CD8-positive, alpha-beta T cell (primary cell): ENCODE measurements at regions of chr19 and their contacts with region 1.

Region 1: GRCh38 chr19:38849860-38850435 is at the start of gene HNRNPL:
- DNase-seq: peak in 6 of 9 experiments; percentile 98 to 100 (median 99)
- ATAC-seq: peak; percentile 68
- H3K4me3 ChIP-seq: peak within 1 kb of the TSS; percentile 70 to 72
- H3K4me3 Mint-ChIP-seq: peak within 1 kb of the TSS; percentile 97
- H3K27ac ChIP-seq: peak within 1 kb of the TSS; percentile 85 to 97
- H3K27ac Mint-ChIP-seq: peak within 1 kb of the TSS; percentile 99
- H3K4me1 ChIP-seq: peaks cover 54% of the 10 kb centered on the region
- H3K4me1 Mint-ChIP-seq: peaks cover 52% of the 10 kb centered on the region
- H3K27me3 ChIP-seq: no peaks in the 10 kb centered on the region
- H3K27me3 Mint-ChIP-seq: no peaks in the 10 kb centered on the region
- CTCF ChIP-seq: peak; percentile 21
- total RNA-seq, gene HNRNPL: 615 to 625 TPM

Region 2: DNA sequence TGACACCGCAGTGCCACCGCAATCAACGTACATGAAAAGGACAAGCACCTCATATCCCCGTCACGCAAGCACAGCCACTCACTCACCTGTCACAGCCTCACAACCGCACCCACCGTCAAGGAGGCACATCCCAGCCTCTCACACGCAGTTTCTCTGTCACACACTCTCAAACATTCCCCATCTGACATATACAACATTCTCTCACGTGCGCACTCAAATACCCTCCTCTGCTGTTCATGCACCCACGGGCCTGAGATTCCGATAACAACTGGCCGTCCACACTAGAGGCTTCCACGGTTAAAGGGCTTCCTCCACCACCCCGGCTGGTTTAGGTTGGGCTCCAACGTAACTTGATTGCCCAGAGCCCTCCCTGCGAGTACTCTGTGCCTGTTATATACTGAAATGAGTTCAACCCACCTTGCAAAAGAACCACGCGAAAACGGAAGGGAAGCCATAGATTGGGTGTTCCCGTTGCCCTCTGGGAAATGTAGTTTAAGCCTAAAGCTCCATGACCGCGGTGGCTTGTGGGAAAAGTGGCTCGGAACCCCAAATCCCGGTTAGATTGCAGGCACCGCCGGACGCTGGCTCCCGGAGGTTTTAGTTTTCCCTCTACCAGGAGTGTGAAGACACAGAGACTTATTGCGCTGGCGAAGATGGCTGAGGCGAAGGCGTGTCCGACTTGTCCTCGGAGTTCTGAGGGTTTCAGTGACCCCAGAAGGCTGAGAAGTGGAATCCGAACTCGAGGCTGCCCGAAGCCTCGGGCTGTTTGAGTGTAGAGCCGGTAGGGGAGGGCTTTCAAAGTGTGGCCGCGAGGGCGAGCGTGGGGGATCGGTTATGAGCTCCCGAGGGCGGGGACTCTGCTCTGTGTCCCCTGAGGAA is 1070.6 kb before region 1 on chr19 and contains the start of gene ZNF573:
- CTCF ChIA-PET with region 1: no interaction called
- POLR2A ChIA-PET with region 1: no interaction called
- intact Hi-C with region 1: loop called in 1 of 2 experiments (anchors 10 kb)
- DNase-seq: peak; percentile 66 to 99 (median 82)
- ATAC-seq: peak; percentile 84
- H3K4me3 ChIP-seq: peak within 1 kb of the TSS; percentile 67 to 70
- H3K4me3 Mint-ChIP-seq: peak within 1 kb of the TSS; percentile 97
- H3K27ac ChIP-seq: peak within 1 kb of the TSS; percentile 96 to 98
- H3K27ac Mint-ChIP-seq: peak within 1 kb of the TSS; percentile 91
- H3K4me1 ChIP-seq: peaks cover 12% of the 10 kb centered on the region
- H3K4me1 Mint-ChIP-seq: peaks cover 46% of the 10 kb centered on the region
- H3K27me3 ChIP-seq: no peaks in the 10 kb centered on the region
- H3K27me3 Mint-ChIP-seq: no peaks in the 10 kb centered on the region
- CTCF ChIP-seq: no peak
- total RNA-seq, gene ZNF573: 3.9 to 5.8 TPM

Region 3: GRCh38 chr19:38634757-38635482 is 215.0 kb before region 1 on chr19:
- CTCF ChIA-PET with region 1: interaction called, 3 read pairs
- POLR2A ChIA-PET with region 1: no interaction called
- intact Hi-C with region 1: loop called in 1 of 2 experiments (anchors 5 kb)
- DNase-seq: peak; percentile 49 to 84 (median 73)
- ATAC-seq: peak; percentile 30
- H3K4me3 ChIP-seq: no peak overlapping the region
- H3K4me3 Mint-ChIP-seq: peak overlapping the region; percentile 47
- H3K27ac ChIP-seq: peak overlapping the region in 1 of 2 experiments; percentile 63
- H3K27ac Mint-ChIP-seq: peak overlapping the region; percentile 46
- H3K4me1 ChIP-seq: peaks cover 26% of the 10 kb centered on the region
- H3K4me1 Mint-ChIP-seq: peaks cover 24% of the 10 kb centered on the region
- H3K27me3 ChIP-seq: no peaks in the 10 kb centered on the region
- H3K27me3 Mint-ChIP-seq: no peaks in the 10 kb centered on the region
- CTCF ChIP-seq: peak; percentile 88

Region 4: DNA sequence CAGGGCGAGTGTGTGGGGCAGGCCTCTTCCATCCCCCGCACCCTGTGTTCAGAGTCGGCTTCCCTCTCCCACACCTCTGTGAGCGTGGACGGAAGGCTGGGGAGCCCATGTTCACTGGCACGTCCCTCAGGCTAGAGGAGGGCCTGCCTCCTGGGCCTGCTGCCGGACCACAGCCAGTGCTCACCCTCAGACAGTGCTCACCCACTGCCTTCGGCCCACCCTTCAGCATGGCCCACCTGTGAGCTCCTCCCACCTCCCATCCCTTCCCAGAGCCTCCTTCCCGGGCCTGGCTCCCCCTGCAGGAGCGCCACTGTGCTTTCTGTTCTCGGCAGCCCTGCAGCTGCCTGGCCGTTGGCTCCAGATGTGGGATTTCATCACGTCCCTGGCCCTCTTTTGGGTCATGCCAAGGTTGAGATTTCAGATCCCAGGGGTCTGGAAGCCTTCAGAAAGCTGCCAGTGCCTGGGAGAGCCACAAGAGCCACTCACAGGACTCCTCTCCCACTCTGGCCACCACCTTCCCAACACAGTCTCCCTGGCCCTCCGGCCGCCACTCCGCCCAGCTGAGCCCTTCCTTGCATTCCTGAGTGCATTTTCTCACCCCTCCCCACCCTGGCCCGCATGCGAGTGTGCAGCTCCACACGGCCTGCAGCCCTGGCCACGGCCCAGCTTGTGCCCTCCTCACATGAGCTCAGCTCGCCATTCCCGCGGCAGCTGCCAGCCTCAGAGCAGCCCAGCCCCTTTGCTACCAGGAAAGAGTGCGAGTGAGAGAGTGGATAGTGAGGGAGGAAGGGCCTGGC is 131.0 kb before region 1 on chr19:
- CTCF ChIA-PET with region 1: no interaction called
- POLR2A ChIA-PET with region 1: no interaction called
- intact Hi-C with region 1: no loop called
- DNase-seq: no peak
- ATAC-seq: no peak
- H3K4me3 ChIP-seq: no peak overlapping the region
- H3K4me3 Mint-ChIP-seq: no peak overlapping the region
- H3K27ac ChIP-seq: no peak overlapping the region
- H3K27ac Mint-ChIP-seq: no peak overlapping the region
- H3K4me1 ChIP-seq: no peaks in the 10 kb centered on the region
- H3K4me1 Mint-ChIP-seq: no peaks in the 10 kb centered on the region
- H3K27me3 ChIP-seq: no peaks in the 10 kb centered on the region
- H3K27me3 Mint-ChIP-seq: no peaks in the 10 kb centered on the region
- CTCF ChIP-seq: no peak

Region 5: DNA sequence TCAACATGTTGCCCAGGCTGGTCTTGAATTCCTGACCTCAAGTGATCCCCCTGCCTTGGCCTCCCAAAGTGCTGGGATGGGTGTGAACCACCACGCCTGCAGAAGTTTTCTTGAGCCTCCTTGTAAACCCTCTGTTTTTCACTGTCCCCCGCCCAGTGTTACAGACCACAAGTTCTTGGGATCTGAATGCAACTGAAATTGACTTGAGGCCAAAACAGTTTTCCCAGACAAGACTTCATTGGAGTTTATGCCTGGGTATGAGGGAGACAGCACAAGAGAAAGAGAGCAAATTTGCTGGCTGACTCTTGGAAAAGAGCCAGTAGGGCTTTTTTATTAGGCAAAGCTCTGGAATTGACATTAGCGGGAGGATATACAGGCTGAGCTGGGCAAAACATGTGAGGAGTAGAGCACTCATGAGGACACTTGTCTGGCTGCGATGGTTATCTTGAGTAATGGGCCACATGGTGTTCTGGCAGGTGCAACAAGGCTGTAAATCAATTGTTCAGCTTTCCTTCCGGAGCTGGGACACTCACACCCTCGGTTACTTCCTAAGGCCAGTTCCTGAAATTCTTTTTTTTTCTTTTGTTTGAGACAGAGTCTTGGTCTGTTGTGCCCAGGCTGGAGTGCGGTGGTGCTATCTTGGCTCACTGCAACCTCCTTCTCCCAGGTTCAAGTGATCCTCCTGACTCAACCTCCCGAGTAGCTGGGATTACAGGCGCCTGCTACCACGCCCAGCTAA is 12.5 kb after region 1 on chr19:
- CTCF ChIA-PET with region 1: interaction called, 11 read pairs
- POLR2A ChIA-PET with region 1: interaction called, 46 read pairs
- intact Hi-C with region 1: no loop called
- DNase-seq: no peak
- ATAC-seq: no peak
- H3K4me3 ChIP-seq: no peak overlapping the region
- H3K4me3 Mint-ChIP-seq: no peak overlapping the region
- H3K27ac ChIP-seq: no peak overlapping the region
- H3K27ac Mint-ChIP-seq: no peak overlapping the region
- H3K4me1 ChIP-seq: peaks cover 38% of the 10 kb centered on the region
- H3K4me1 Mint-ChIP-seq: peaks cover 44% of the 10 kb centered on the region
- H3K27me3 ChIP-seq: no peaks in the 10 kb centered on the region
- H3K27me3 Mint-ChIP-seq: no peaks in the 10 kb centered on the region
- CTCF ChIP-seq: no peak

Region 6: GRCh38 chr19:38891771-38892170 is 41.8 kb after region 1 on chr19:
- CTCF ChIA-PET with region 1: interaction called, 12 read pairs
- POLR2A ChIA-PET with region 1: interaction called, 4 read pairs
- intact Hi-C with region 1: no loop called
- DNase-seq: no peak
- ATAC-seq: no peak
- H3K4me3 ChIP-seq: no peak overlapping the region
- H3K4me3 Mint-ChIP-seq: no peak overlapping the region
- H3K27ac ChIP-seq: no peak overlapping the region
- H3K27ac Mint-ChIP-seq: no peak overlapping the region
- H3K4me1 ChIP-seq: peaks cover 3% of the 10 kb centered on the region
- H3K4me1 Mint-ChIP-seq: peaks cover 9% of the 10 kb centered on the region
- H3K27me3 ChIP-seq: no peaks in the 10 kb centered on the region
- H3K27me3 Mint-ChIP-seq: no peaks in the 10 kb centered on the region
- CTCF ChIP-seq: no peak

Region 7: DNA sequence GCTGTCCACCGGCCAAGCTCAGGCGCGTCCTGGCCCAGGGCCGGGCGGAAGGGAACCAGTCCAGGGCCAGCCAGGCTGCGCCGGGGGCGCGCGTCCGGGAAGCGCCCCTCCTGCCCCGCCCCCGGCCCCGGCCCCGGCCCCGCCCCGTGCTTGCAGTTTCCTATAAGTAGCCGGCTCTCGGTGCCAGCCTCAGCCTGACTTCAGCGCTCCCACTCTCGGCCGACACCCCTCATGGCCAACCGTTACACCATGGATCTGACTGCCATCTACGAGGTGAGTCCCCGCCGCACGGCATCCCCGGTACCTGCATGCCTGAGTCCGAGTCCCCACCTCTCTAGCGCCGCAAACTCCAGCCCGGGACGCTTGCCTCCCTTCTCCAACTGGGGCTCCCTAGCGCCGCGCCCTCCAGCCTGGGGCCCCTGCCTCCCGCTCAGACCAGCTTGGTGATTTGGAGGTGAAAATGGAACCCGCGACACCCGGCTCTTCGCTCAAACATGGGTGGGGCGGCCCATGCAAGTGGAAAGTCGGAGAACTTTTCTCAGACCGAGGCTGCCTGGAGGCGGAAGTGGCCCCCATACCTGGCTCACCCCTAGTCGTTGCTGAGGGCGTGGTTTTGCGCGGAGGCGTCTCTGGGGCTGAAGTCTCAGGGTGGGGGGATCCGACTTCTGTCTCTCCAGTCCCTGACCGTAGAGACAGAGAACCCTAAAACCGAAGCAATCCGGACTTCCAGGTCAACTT is 556.9 kb after region 1 on chr19 and contains the start of gene ZFP36:
- CTCF ChIA-PET with region 1: no interaction called
- POLR2A ChIA-PET with region 1: no interaction called
- intact Hi-C with region 1: loop called in 1 of 2 experiments (anchors 5 kb)
- DNase-seq: peak; percentile 85 to 95 (median 89)
- ATAC-seq: peak; percentile 20
- H3K4me3 ChIP-seq: peak within 1 kb of the TSS; percentile 95 to 100
- H3K4me3 Mint-ChIP-seq: peak within 1 kb of the TSS; percentile 89
- H3K27ac ChIP-seq: peak within 1 kb of the TSS; percentile 94 to 100
- H3K27ac Mint-ChIP-seq: peak within 1 kb of the TSS; percentile 98
- H3K4me1 ChIP-seq: peaks cover 57% of the 10 kb centered on the region
- H3K4me1 Mint-ChIP-seq: peaks cover 52% of the 10 kb centered on the region
- H3K27me3 ChIP-seq: no peaks in the 10 kb centered on the region
- H3K27me3 Mint-ChIP-seq: no peaks in the 10 kb centered on the region
- CTCF ChIP-seq: no peak
- total RNA-seq, gene ZFP36: 1,672 to 1,779 TPM